ENCODE measurements at regions of chr14 and their contacts with region 1.

Region 1: DNA sequence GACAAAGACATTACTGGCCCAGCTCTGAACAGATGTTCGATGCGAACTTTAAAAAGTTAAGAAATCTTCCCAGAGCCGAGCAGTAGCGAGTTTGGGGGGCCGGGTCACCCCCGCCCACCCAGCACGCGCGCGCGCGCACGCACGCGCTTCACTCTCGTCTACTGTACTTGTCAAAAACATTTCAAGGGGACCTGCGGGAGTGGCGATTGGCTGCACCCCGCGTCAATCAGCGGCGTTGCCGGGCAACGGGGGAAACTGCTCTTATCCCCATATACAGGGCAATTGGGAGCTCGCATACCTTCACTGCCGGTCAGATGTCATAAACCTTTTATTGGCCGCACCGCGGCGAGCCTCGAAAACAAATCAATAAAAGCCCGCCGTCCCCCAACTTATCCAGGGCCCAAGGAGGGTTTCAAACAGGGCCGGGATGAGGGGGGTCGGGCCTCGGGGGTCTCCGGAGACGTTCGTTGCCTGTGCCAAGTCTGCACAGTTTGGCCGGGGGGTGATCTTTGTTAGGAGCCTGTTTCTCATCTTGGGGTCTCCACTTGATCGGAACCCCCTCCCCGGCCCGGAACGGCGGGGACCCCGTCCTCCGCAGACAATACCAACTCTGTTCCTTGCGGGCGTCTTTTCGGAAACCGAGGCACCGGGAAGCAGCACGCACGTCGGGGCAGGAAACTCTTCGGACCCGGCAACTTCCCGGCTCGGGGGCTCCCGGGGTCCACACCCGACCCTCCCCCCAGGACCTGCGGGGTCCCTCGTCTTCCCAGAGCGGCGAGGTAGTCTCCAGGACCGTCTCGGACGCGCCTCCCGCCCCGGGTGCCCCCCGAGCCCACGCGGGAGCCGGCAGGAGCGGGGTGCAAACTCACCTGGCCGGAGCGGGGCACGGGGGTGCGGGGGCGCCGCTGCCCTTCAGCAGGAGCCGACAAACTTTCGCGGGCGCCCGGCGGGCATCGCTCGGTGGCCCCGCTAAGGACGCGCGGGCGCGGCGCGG is 734 bp downstream of the FOXN3 start:
- DNase-seq: peak; percentile 96
- ATAC-seq: peak; percentile 87
- H3K4me3 ChIP-seq: peak overlapping the region; percentile 74 to 93 (median 87)
- H3K27ac ChIP-seq: peak overlapping the region; percentile 84
- H3K4me1 ChIP-seq: peaks cover 80% of the 10 kb centered on the region
- H3K27me3 ChIP-seq: no peaks in the 10 kb centered on the region
- CTCF ChIP-seq: no peak
- EP300 ChIP-seq: peak in 1 of 2 experiments; percentile 21; a peak in 1 of 4 replicates
- POLR2A ChIP-seq: peak; percentile 31 to 66
- RAD21 ChIP-seq: no peak

Region 2: DNA sequence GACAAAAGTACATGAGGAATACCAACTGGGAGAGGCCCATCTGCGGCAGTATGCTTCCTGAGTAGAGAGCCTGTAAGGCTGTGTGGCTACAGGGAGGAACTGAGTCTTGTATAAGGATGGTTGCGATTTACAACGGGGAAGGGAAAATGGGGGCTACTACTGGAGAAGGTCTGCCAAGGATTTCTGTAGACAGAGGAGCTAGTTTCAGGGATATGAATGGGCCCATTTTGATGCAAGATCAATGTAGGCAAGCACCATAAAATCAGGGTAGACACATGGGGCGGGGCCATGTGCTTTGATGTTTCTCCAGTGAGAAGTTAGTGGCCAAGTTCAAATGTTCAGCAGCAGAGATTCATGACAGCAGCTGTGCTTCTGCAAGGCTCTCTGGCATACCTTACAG is 1262.0 kb before region 1 on chr14:
- CTCF ChIA-PET with region 1: no interaction called
- POLR2A ChIA-PET with region 1: no interaction called
- in situ Hi-C with region 1: no loop called
- intact Hi-C with region 1: no loop called
- DNase-seq: no peak
- ATAC-seq: no peak
- H3K4me3 ChIP-seq: no peak overlapping the region
- H3K27ac ChIP-seq: no peak overlapping the region
- H3K4me1 ChIP-seq: no peaks in the 10 kb centered on the region
- H3K27me3 ChIP-seq: peaks cover 0 to 4% of the 10 kb centered on the region in 2 experiments; a peak in 2 of 5 replicates
- CTCF ChIP-seq: no peak
- EP300 ChIP-seq: no peak
- POLR2A ChIP-seq: no peak
- RAD21 ChIP-seq: no peak

Region 3: GRCh38 chr14:89214221-89214936 is 201.9 kb before region 1 on chr14:
- CTCF ChIA-PET with region 1: no interaction called
- POLR2A ChIA-PET with region 1: no interaction called
- in situ Hi-C with region 1: no loop called
- intact Hi-C with region 1: loop called (anchors 5 kb)
- DNase-seq: peak; percentile 86
- ATAC-seq: peak; percentile 93
- H3K4me3 ChIP-seq: no peak overlapping the region
- H3K27ac ChIP-seq: peak overlapping the region; percentile 53
- H3K4me1 ChIP-seq: peaks cover 57% of the 10 kb centered on the region
- H3K27me3 ChIP-seq: no peaks in the 10 kb centered on the region
- CTCF ChIP-seq: peak; percentile 56
- EP300 ChIP-seq: peak in 1 of 2 experiments; percentile 33; a peak in 1 of 4 replicates
- POLR2A ChIP-seq: no peak
- RAD21 ChIP-seq: 0 out of 2 replicates have a peak, but pooled peaks have one; percentile 49

Region 4: DNA sequence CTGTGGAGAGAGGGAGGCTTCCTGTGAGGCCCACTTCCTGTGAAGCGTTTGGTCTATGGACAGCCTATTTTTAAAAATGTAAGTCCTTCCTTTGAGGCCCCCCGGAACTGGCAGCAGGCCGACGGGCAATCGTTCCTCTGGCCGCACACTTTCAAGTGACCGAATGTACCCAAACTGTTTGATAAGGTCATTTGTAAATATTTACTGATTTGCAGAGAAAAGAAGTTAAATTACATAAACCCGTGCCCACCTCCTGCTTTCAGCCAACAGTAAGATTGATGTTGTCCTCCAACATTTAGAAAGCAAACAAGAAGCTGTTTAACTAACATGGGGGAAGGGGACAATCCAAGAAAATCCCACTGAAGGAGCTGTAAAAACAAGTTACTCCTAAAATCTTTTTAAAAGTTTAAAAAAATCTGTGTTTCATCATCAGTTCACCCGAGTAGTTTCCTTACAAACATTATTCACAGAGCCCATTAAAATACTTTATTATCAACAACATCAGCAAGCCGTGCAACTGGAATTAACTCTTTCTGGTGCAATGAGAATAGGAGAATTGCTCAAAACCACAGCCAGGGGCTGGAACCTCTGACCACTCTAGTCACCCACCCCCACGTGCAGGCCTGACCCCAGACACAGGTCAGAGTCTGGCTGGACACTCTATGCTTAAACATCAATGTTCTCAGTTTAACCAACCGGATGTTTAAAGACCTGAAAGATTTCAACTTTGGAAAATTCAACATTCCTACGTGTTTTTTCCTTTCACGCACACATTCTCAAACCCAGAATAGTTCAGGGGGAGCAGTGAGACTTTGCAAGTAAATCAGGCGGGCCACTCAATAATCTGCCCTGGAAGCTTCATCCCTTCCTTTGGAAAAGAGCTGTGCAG is 64.5 kb before region 1 on chr14:
- CTCF ChIA-PET with region 1: no interaction called
- POLR2A ChIA-PET with region 1: interaction called, 28 read pairs
- in situ Hi-C with region 1: no loop called
- intact Hi-C with region 1: loop called (anchors 5 kb)
- DNase-seq: peak; percentile 98
- ATAC-seq: peak; percentile 91
- H3K4me3 ChIP-seq: 0 out of 6 replicates have a peak overlapping the region, but pooled peaks of 1 of the 3 experiments have one; percentile 12
- H3K27ac ChIP-seq: peak overlapping the region; percentile 89
- H3K4me1 ChIP-seq: peaks cover 69% of the 10 kb centered on the region
- H3K27me3 ChIP-seq: no peaks in the 10 kb centered on the region
- CTCF ChIP-seq: no peak
- EP300 ChIP-seq: peak; percentile 82 to 98; a peak in 3 of 4 replicates
- POLR2A ChIP-seq: no peak
- RAD21 ChIP-seq: no peak

Region 5: DNA sequence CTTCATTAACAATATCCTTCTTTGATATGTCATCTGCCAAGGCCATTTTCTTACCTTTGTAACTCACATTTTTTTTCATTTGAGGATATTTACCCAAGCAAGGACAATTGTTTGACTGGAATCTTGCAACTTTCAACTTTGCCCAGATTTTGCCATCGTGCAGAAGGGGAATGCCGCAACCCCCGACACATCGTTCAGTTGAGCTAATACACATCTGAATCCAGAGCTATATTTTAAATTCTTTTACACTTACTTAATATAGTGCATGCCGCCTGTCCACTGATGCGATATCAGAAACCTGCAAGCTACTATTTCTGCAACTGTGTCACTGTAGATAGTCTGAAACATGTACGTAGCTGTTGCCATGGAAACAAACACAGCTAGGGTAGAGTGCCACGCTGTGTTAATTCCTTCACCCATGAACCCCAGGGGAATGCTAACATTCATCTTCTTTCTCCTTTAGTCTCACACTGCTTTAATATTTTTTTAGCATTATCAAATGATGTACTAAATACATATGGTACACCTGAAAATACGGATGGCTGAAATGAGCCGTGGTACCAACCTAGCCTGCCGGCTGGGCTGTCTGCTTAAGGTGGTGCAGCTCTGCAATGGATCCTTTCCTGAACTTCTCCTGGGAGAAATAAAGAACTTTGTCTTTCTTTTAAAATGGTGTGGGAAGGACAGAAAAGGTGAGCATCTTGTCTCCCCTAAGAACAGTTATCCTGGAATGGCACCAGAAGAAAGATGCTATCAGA is 77.8 kb after region 1 on chr14:
- CTCF ChIA-PET with region 1: no interaction called
- POLR2A ChIA-PET with region 1: interaction called, 3 read pairs
- in situ Hi-C with region 1: no loop called
- intact Hi-C with region 1: loop called (anchors 5 kb)
- DNase-seq: peak; percentile 73
- ATAC-seq: peak; percentile 85
- H3K4me3 ChIP-seq: peak overlapping the region in 1 of 3 experiments; percentile 13; a peak in 1 of 6 replicates
- H3K27ac ChIP-seq: peak overlapping the region; percentile 65
- H3K4me1 ChIP-seq: peaks cover 60% of the 10 kb centered on the region
- H3K27me3 ChIP-seq: no peaks in the 10 kb centered on the region
- CTCF ChIP-seq: no peak
- EP300 ChIP-seq: peak; percentile 45 to 75; a peak in 1 of 4 replicates
- POLR2A ChIP-seq: no peak
- RAD21 ChIP-seq: no peak

Region 6: GRCh38 chr14:89618811-89619551 is 202.7 kb after region 1 on chr14:
- CTCF ChIA-PET with region 1: no interaction called
- POLR2A ChIA-PET with region 1: no interaction called
- in situ Hi-C with region 1: no loop called
- intact Hi-C with region 1: loop called (anchors 5 kb)
- DNase-seq: peak; percentile 12
- ATAC-seq: peak; percentile 93
- H3K4me3 ChIP-seq: peak overlapping the region; percentile 79 to 92 (median 80)
- H3K27ac ChIP-seq: peak overlapping the region; percentile 65
- H3K4me1 ChIP-seq: peaks cover 75% of the 10 kb centered on the region
- H3K27me3 ChIP-seq: no peaks in the 10 kb centered on the region; a peak in 2 of 5 replicates
- CTCF ChIP-seq: no peak
- EP300 ChIP-seq: no peak; a peak in 1 of 4 replicates
- POLR2A ChIP-seq: peak in 1 of 2 experiments; percentile 56; a peak in 2 of 4 replicates
- RAD21 ChIP-seq: peak; percentile 83; the same call in 1 of the 2 replicates

Region 7: GRCh38 chr14:89915114-89915878 is 499.0 kb after region 1 on chr14:
- CTCF ChIA-PET with region 1: no interaction called
- POLR2A ChIA-PET with region 1: no interaction called
- in situ Hi-C with region 1: loop called (anchors 25 kb)
- intact Hi-C with region 1: loop called (anchors 5 kb)
- DNase-seq: peak; percentile 59
- ATAC-seq: no peak
- H3K4me3 ChIP-seq: peak overlapping the region in 1 of 3 experiments; percentile 19; a peak in 1 of 6 replicates
- H3K27ac ChIP-seq: peak overlapping the region; percentile 28
- H3K4me1 ChIP-seq: peaks cover 38% of the 10 kb centered on the region
- H3K27me3 ChIP-seq: no peaks in the 10 kb centered on the region
- CTCF ChIP-seq: peak; percentile 82
- EP300 ChIP-seq: no peak
- POLR2A ChIP-seq: no peak
- RAD21 ChIP-seq: peak; percentile 74

Measured in HepG2 (cell line).